K562 (cell line): ENCODE measurements at regions of chr6 and their contacts with region 1.

Region 1: GRCh38 chr6:37029249-37029971 is 24.0 kb downstream of the FGD2 start:
- DNase-seq: peak; percentile 91 to 97 (median 94)
- ATAC-seq: peak; percentile 99
- H3K4me3 ChIP-seq: no peak overlapping the region
- H3K27ac ChIP-seq: peak overlapping the region; percentile 46
- H3K4me1 ChIP-seq: peaks cover 15 to 63% of the 10 kb centered on the region in 2 experiments
- H3K27me3 ChIP-seq: no peaks in the 10 kb centered on the region
- CTCF ChIP-seq: peak; percentile 96 to 99 (median 97)
- EP300 ChIP-seq: peak; percentile 76
- POLR2A ChIP-seq: no peak
- RAD21 ChIP-seq: peak; percentile 99 to 100

Region 2: GRCh38 chr6:37177077-37177934 is 147.9 kb after region 1 on chr6:
- CTCF ChIA-PET with region 1: interaction called, 77 read pairs
- POLR2A ChIA-PET with region 1: interaction called, 128 read pairs
- in situ Hi-C with region 1: loop called (anchors 10 kb)
- intact Hi-C with region 1: loop called (anchors 1 kb)
- DNase-seq: peak; percentile 41 to 83 (median 62)
- ATAC-seq: peak; percentile 59
- H3K4me3 ChIP-seq: no peak overlapping the region
- H3K27ac ChIP-seq: peak overlapping the region; percentile 82
- H3K4me1 ChIP-seq: peaks cover 32 to 52% of the 10 kb centered on the region in 2 experiments
- H3K27me3 ChIP-seq: no peaks in the 10 kb centered on the region
- CTCF ChIP-seq: peak; percentile 43 to 61 (median 53); a peak in 5 of 6 replicates
- EP300 ChIP-seq: peak; percentile 56
- POLR2A ChIP-seq: no peak; the same call in 1 of the 2 replicates
- RAD21 ChIP-seq: peak; percentile 47 to 71

Region 3: DNA sequence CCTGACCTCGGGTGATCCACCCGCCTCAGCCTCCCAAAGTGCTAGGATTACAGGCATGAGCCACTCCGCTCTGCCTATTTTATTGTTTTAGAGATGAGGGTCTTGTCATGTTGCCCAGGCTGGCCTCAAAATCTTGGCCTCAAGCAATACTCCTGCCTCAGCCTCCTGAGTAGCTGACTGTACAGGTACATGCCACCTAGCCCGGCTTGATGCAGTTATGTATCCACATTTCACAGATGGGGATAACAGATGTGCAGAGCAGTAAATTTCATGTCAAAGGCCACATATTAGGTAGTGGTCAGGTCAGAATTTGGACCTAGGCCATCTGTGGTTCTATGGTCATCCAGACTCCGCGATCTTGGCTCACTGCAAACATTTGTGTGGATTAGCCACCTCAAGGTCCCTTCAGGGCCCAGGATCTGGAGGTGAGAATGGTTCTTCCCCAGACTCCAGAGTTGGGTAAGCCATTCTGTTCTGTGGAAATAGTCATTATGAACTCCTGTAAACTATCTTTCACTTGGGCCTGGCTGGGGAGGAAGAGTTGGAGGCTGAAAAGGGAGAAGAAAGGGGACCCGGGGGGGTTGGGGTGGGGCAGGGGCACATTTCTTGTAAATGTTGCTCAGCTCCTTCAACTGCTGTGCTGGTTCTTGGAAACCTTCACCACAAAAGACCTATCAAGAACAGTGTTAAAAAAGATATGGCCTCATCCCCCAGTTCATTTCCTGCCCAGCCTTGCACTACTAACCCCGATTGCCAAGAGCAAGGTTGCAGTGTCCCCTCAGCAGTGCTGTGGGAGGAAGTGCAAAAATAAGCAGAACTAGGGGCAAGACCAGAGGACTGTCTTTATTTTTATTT is 153.6 kb after region 1 on chr6:
- CTCF ChIA-PET with region 1: interaction called, 4 read pairs
- POLR2A ChIA-PET with region 1: interaction called, 128 read pairs
- in situ Hi-C with region 1: loop called (anchors 10 kb)
- intact Hi-C with region 1: loop called (anchors 1 kb)
- DNase-seq: peak; percentile 65 to 99 (median 78)
- ATAC-seq: peak; percentile 90
- H3K4me3 ChIP-seq: no peak overlapping the region
- H3K27ac ChIP-seq: peak overlapping the region; percentile 97
- H3K4me1 ChIP-seq: peaks cover 58 to 65% of the 10 kb centered on the region in 2 experiments
- H3K27me3 ChIP-seq: no peaks in the 10 kb centered on the region
- CTCF ChIP-seq: no peak
- EP300 ChIP-seq: peak; percentile 100
- POLR2A ChIP-seq: peak; percentile 60
- RAD21 ChIP-seq: peak; percentile 29 to 43; a peak in 3 of 4 replicates

Region 4: GRCh38 chr6:37483917-37484785 is 454.7 kb after region 1 on chr6:
- CTCF ChIA-PET with region 1: no interaction called
- POLR2A ChIA-PET with region 1: no interaction called
- in situ Hi-C with region 1: no loop called
- intact Hi-C with region 1: loop called (anchors 10 kb)
- DNase-seq: peak; percentile 73 to 88 (median 86)
- ATAC-seq: peak; percentile 91
- H3K4me3 ChIP-seq: no peak overlapping the region
- H3K27ac ChIP-seq: no peak overlapping the region
- H3K4me1 ChIP-seq: peaks cover 6 to 21% of the 10 kb centered on the region in 2 experiments; a peak in 4 of 5 replicates
- H3K27me3 ChIP-seq: no peaks in the 10 kb centered on the region
- CTCF ChIP-seq: peak; percentile 83 to 98 (median 96)
- EP300 ChIP-seq: no peak
- POLR2A ChIP-seq: no peak
- RAD21 ChIP-seq: peak; percentile 71 to 87